PC-3 (cell line): ENCODE measurements at regions of chr3 and their contacts with region 1.

Region 1: GRCh38 chr3:4633078-4634004 is 140.2 kb downstream of the ITPR1 start:
- DNase-seq: peak; percentile 77
- ATAC-seq: peak; percentile 82
- H3K4me3 ChIP-seq: no peak overlapping the region
- H3K27ac ChIP-seq: no peak overlapping the region
- H3K4me1 ChIP-seq: no peaks in the 10 kb centered on the region
- H3K27me3 ChIP-seq: no peaks in the 10 kb centered on the region
- CTCF ChIP-seq: peak; percentile 96

Region 2: GRCh38 chr3:4334548-4334947 is 298.8 kb before region 1 on chr3:
- CTCF ChIA-PET with region 1: interaction called, 6 read pairs
- POLR2A ChIA-PET with region 1: no interaction called
- intact Hi-C with region 1: loop called (anchors 1 kb)
- DNase-seq: peak; percentile 42
- ATAC-seq: no peak; the same call in 1 of the 2 replicates
- H3K4me3 ChIP-seq: no peak overlapping the region
- H3K27ac ChIP-seq: no peak overlapping the region
- H3K4me1 ChIP-seq: no peaks in the 10 kb centered on the region
- H3K27me3 ChIP-seq: no peaks in the 10 kb centered on the region
- CTCF ChIP-seq: peak; percentile 64

Region 3: GRCh38 chr3:4416961-4417360 is 216.4 kb before region 1 on chr3:
- CTCF ChIA-PET with region 1: interaction called, 3 read pairs
- POLR2A ChIA-PET with region 1: no interaction called
- intact Hi-C with region 1: loop called (anchors 2 kb)
- DNase-seq: peak; percentile 100
- ATAC-seq: peak; percentile 86
- H3K4me3 ChIP-seq: peak overlapping the region; percentile 43; the same call in 1 of the 2 replicates
- H3K27ac ChIP-seq: peak overlapping the region; percentile 99
- H3K4me1 ChIP-seq: peaks cover 72% of the 10 kb centered on the region
- H3K27me3 ChIP-seq: no peaks in the 10 kb centered on the region
- CTCF ChIP-seq: no peak

Region 4: DNA sequence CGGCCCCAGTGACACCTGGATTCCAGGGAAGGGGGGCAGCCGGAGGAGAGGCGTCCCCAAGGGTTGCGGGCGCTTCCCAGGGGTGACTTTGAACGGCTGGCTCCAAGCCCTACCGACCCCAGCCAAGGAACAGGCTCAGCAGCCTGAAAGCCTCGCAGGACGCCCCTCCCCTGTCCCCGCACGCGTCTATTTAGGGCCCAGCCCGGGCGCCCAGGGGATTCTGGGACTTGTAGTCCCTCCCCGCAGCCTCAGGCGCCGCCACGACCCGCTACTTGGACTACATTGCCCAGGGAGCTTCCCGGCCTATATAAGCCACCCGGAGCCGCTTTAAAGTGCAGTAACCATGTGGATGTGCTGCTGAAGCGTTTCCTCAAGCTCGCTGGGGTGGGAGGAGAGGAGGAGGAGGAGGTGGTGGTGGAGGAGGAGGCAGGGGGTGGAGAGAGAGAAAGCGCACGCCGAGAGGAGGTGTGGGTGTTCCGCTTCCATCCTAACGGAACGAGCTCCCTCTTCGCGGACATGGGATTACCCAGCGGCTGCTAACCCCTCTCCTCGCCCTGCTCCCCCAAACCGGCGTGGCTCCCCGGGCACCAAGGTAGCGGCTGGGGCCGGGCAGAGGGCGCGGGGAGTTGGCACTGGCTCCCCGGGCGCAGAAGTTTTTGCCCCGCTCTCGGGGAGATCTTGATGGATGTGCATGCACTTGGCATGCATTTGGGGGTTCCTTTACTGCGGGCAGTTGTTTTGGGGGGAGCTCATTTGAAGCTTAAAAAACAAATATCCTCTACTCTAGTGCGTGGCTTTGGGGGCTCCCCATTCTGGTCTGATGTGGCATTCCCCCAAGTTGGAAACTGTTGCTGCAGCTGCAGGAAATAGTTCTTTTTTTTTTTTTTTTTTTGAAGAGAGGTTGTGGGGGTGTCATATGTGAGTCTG is 140.1 kb before region 1 on chr3 and contains the start of gene ITPR1:
- CTCF ChIA-PET with region 1: interaction called, 3 read pairs
- POLR2A ChIA-PET with region 1: no interaction called
- intact Hi-C with region 1: loop called (anchors 1 kb)
- DNase-seq: peak; percentile 99
- ATAC-seq: peak; percentile 81
- H3K4me3 ChIP-seq: peak within 1 kb of the TSS; percentile 80
- H3K27ac ChIP-seq: peak within 1 kb of the TSS; percentile 78
- H3K4me1 ChIP-seq: peaks cover 29% of the 10 kb centered on the region
- H3K27me3 ChIP-seq: no peaks in the 10 kb centered on the region
- CTCF ChIP-seq: no peak
- total RNA-seq, gene ITPR1: 48.5 and 57.5 TPM in 2 replicates

Region 5: DNA sequence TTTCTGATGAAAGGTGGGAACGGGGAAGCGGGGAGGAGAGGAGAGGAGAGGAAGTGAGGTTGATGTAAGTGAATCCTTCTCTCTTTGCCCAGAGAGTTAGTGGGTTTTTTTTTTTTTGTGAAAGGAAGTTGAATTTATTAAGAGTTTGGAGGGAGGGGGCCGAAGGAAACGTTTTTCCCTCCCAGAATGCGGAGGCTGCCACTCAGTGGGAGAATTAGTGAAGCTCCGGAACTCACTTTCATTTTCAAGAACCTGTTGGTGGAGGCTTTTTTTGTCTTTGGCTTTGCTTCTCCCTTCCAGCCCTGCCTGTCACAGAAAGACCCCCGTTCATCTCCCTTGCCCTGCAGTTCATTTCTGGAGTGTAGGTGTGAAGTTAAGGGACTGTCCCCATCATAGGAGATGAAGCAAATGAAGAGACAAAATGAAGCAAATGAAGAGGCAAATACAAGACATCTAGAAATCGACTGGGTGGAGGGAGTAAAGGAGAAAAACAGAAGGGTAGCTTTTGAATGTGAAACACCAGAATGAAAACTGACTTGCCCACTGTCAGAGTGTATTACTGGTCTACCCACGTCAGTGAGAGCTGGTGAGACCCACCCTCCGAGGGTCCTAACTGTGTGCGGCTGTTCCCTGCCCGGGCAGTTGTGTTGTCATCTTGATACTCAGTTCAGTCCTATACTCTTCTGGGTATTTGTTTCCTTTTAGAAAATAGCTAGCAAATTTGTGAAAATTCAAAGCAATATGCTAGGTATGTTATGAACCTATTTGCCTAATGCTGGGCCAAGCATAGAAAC is 48.7 kb before region 1 on chr3:
- CTCF ChIA-PET with region 1: interaction called, 8 read pairs
- POLR2A ChIA-PET with region 1: no interaction called
- intact Hi-C with region 1: loop called (anchors 5 kb)
- DNase-seq: no peak
- ATAC-seq: no peak
- H3K4me3 ChIP-seq: peak overlapping the region; percentile 50
- H3K27ac ChIP-seq: no peak overlapping the region
- H3K4me1 ChIP-seq: peaks cover 19% of the 10 kb centered on the region
- H3K27me3 ChIP-seq: no peaks in the 10 kb centered on the region
- CTCF ChIP-seq: no peak